A673 (cell line): ENCODE measurements at regions of chr3 and their contacts with region 1.

Region 1: GRCh38 chr3:107522510-107523288 is at the start of gene BBX:
- DNase-seq: peak; percentile 95
- H3K4me3 ChIP-seq: peak within 1 kb of the TSS; percentile 93
- H3K27ac ChIP-seq: peak within 1 kb of the TSS; percentile 87
- H3K4me1 ChIP-seq: peaks cover 3% of the 10 kb centered on the region
- H3K27me3 ChIP-seq: no peaks in the 10 kb centered on the region
- CTCF ChIP-seq: no peak
- total RNA-seq, gene BBX: 28.9 and 37.7 TPM in 2 replicates

Region 2: GRCh38 chr3:107429320-107430181 is 93.1 kb before region 1 on chr3:
- CTCF ChIA-PET with region 1: no interaction called
- POLR2A ChIA-PET with region 1: no interaction called
- intact Hi-C with region 1: loop called (anchors 5 kb)
- DNase-seq: peak; percentile 91
- H3K4me3 ChIP-seq: peak overlapping the region; percentile 59
- H3K27ac ChIP-seq: no peak overlapping the region
- H3K4me1 ChIP-seq: peaks cover 17% of the 10 kb centered on the region
- H3K27me3 ChIP-seq: no peaks in the 10 kb centered on the region
- CTCF ChIP-seq: peak; percentile 91